GM12878 (cell line): ENCODE measurements at regions of chr12 and their contacts with region 1.

Region 1: DNA sequence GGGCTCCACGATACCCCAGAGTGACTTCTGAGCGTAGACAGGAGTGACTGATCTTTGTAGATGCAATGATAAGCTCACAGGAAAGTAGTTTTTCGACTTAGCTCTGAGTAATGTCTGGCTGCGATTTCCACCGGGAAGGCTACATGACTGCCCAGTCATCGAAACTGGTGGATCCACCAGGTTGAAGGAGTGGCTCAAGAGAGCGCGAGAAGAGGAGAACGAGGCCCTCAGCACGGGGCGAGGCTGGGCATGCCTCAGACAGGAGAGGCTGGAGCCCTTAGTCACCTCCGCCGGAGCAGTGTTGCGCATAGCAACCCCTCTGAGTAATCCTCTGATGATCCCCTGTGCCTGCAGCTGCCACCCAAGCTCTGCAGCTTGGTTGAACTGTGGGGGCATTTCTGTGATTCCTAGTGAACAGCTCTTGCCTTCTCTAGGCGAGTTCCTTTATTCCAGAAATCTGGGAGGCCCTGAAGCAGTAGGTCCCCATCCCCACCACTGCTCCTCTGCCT is 25.6 kb downstream of the ELK3 start:
- DNase-seq: no peak
- ATAC-seq: no peak
- H3K4me3 ChIP-seq: no peak overlapping the region
- H3K27ac ChIP-seq: no peak overlapping the region
- H3K4me1 ChIP-seq: peaks cover 13% of the 10 kb centered on the region
- H3K27me3 ChIP-seq: no peaks in the 10 kb centered on the region
- CTCF ChIP-seq: no peak
- EP300 ChIP-seq: no peak
- POLR2A ChIP-seq: no peak
- RAD21 ChIP-seq: no peak

Region 2: DNA sequence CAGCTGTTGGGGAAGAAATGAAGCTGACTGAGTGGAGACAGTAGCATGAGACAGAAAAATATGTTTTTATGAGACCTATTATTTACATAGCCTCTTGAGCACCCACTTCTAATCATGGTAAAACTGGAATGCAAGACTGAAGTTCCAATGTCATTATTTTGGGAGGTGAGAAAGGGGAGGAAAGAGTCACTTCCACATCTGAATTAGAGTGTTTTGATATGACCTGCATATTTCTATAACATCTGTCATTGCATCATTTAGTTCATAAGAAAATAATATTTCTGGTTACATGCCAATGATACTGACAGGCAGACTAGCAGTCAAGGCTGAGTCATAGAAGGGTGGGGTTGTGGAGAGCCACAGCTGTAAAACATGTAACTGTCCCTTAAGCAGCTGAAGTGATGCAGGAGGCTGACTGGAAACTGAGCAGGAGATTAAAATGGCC is 455.9 kb before region 1 on chr12:
- CTCF ChIA-PET with region 1: no interaction called
- POLR2A ChIA-PET with region 1: no interaction called
- RAD21 ChIA-PET with region 1: no interaction called
- SMC1A ChIA-PET with region 1: no interaction called
- in situ Hi-C with region 1: no loop called
- intact Hi-C with region 1: no loop called
- DNase-seq: no peak
- ATAC-seq: no peak
- H3K4me3 ChIP-seq: no peak overlapping the region
- H3K27ac ChIP-seq: no peak overlapping the region
- H3K4me1 ChIP-seq: no peaks in the 10 kb centered on the region
- H3K27me3 ChIP-seq: 0 out of 4 replicates have a peak, but pooled peaks cover 0 to 2% of the 10 kb centered on the region in 2 experiments
- CTCF ChIP-seq: no peak
- EP300 ChIP-seq: no peak
- POLR2A ChIP-seq: no peak
- RAD21 ChIP-seq: no peak

Region 3: GRCh38 chr12:95942524-95943329 is 277.0 kb before region 1 on chr12 and contains the start of gene CCDC38:
- CTCF ChIA-PET with region 1: interaction called, 10 read pairs
- POLR2A ChIA-PET with region 1: interaction called, 15 read pairs
- RAD21 ChIA-PET with region 1: no interaction called
- SMC1A ChIA-PET with region 1: no interaction called
- in situ Hi-C with region 1: no loop called
- intact Hi-C with region 1: no loop called
- DNase-seq: peak; percentile 57
- ATAC-seq: peak; percentile 98
- H3K4me3 ChIP-seq: peak within 1 kb of the TSS; percentile 94
- H3K27ac ChIP-seq: peak within 1 kb of the TSS; percentile 53
- H3K4me1 ChIP-seq: peaks cover 3% of the 10 kb centered on the region; the same call in 1 of the 2 replicates
- H3K27me3 ChIP-seq: no peaks in the 10 kb centered on the region
- CTCF ChIP-seq: no peak
- EP300 ChIP-seq: no peak
- POLR2A ChIP-seq: peak; percentile 78
- RAD21 ChIP-seq: no peak
- polyA plus RNA-seq, gene CCDC38: not detected

Region 4: GRCh38 chr12:96047229-96048211 is 172.2 kb before region 1 on chr12:
- CTCF ChIA-PET with region 1: interaction called, 13 read pairs
- POLR2A ChIA-PET with region 1: no interaction called
- RAD21 ChIA-PET with region 1: interaction called, 10 read pairs
- SMC1A ChIA-PET with region 1: interaction called, 7 read pairs
- in situ Hi-C with region 1: no loop called
- intact Hi-C with region 1: no loop called
- DNase-seq: peak; percentile 68
- ATAC-seq: peak; percentile 85
- H3K4me3 ChIP-seq: peak overlapping the region; percentile 18; the same call in 1 of the 2 replicates
- H3K27ac ChIP-seq: no peak overlapping the region
- H3K4me1 ChIP-seq: peaks cover 29% of the 10 kb centered on the region
- H3K27me3 ChIP-seq: no peaks in the 10 kb centered on the region
- CTCF ChIP-seq: no peak
- EP300 ChIP-seq: peak in 1 of 2 experiments; percentile 21; a peak in 1 of 4 replicates
- POLR2A ChIP-seq: no peak
- RAD21 ChIP-seq: no peak

Region 5: DNA sequence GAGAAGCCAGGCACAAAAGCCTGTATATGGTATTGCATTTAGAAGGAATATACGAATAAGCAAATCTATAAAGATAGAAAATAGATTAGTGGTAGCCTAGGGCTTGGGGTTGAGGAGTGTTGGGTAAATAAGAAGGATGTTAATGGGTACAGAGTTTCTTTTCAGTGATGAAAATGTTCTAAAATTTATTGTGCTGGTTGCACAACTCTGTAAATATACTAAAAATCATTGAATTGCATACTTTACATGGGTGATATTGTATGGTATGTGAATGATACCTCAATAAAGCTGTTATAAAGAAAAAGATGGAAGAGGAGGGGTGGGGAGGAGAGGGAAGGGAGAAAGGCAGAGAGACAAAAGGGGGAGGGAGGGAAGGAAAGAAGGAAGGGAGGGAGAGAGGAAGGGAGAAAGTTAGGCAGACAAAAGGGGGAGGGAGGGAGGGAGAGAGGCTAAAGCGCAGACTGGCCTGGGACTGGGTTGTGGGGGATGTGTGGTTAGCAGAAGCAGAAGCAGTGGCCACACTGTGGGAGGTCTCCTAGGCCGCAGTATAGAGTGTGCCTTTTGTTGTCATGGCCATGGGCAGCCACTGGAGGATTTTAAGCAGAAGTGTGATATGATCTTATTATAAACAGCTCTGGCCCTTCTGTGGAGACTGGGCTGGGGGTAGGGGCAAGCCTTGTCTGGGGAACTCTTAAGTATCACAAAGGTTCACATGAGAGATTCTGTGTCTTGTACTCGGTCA is 99.2 kb before region 1 on chr12:
- CTCF ChIA-PET with region 1: interaction called, 6 read pairs
- POLR2A ChIA-PET with region 1: no interaction called
- RAD21 ChIA-PET with region 1: interaction called, 3 read pairs
- SMC1A ChIA-PET with region 1: no interaction called
- in situ Hi-C with region 1: no loop called
- intact Hi-C with region 1: loop called (anchors 5 kb)
- DNase-seq: peak; percentile 15
- ATAC-seq: peak; percentile 98
- H3K4me3 ChIP-seq: no peak overlapping the region
- H3K27ac ChIP-seq: no peak overlapping the region
- H3K4me1 ChIP-seq: peaks cover 13% of the 10 kb centered on the region
- H3K27me3 ChIP-seq: no peaks in the 10 kb centered on the region; a peak in 1 of 4 replicates
- CTCF ChIP-seq: peak in 1 of 3 experiments; percentile 18; a peak in 1 of 6 replicates
- EP300 ChIP-seq: peak in 1 of 2 experiments; percentile 59; a peak in 1 of 4 replicates
- POLR2A ChIP-seq: no peak
- RAD21 ChIP-seq: no peak

Region 6: DNA sequence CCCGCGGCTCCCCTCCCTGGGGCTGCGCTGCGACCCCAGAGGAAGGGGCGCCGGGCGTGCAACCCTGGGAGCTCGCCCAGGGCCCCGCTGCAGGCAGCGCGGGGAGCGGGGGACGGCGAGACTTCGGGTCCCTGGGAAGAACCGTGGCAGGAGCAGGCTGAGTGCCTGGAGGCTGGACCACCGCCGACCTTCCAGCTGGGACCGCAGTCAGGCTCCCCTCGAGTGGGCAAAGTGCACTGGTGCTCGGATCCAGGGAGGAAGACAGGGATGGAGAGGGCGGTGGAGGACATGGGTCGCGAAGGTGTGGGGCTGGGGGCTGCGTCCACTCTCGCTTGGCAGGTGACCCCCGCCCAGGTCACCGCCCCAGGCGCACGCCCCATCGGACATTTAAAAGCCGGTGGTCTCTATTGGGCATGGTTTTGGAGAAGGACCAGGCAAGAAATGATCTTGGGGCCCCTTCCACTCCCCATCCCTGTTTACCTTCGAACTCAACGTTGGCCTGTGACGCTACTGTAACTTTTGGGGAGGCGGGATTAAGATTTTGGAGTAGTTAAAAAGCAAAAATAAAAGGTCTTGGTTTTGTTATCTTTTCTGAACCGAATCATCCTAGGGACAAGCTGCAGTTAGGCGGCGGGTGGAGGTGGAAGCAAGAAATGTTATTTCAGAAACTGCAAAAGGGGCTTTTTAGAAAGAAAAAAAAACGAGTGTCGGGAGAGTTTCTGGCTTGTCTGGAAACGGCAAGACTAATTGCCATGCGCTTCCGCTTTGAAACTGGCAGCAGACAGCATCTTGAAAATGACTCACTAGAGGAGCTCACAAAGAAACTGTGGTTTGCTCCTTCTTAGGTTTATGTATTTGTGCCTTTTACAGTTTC is 24.5 kb before region 1 on chr12:
- CTCF ChIA-PET with region 1: interaction called, 18 read pairs
- POLR2A ChIA-PET with region 1: no interaction called
- RAD21 ChIA-PET with region 1: interaction called, 25 read pairs
- SMC1A ChIA-PET with region 1: interaction called, 25 read pairs
- in situ Hi-C with region 1: no loop called
- intact Hi-C with region 1: no loop called
- DNase-seq: peak; percentile 80
- ATAC-seq: peak; percentile 80
- H3K4me3 ChIP-seq: peak overlapping the region; percentile 98
- H3K27ac ChIP-seq: peak overlapping the region; percentile 72
- H3K4me1 ChIP-seq: peaks cover 28% of the 10 kb centered on the region
- H3K27me3 ChIP-seq: peaks cover under 1 to 2% of the 10 kb centered on the region in 2 experiments; a peak in 3 of 4 replicates
- CTCF ChIP-seq: no peak
- EP300 ChIP-seq: peak; percentile 75 to 79; a peak in 3 of 4 replicates
- POLR2A ChIP-seq: peak; percentile 33; the same call in 1 of the 2 replicates
- RAD21 ChIP-seq: 0 out of 2 replicates have a peak, but pooled peaks have one; percentile 2

Region 7: GRCh38 chr12:96489103-96490056 is 269.6 kb after region 1 on chr12 and contains the start of gene CFAP54:
- CTCF ChIA-PET with region 1: interaction called, 13 read pairs
- POLR2A ChIA-PET with region 1: no interaction called
- RAD21 ChIA-PET with region 1: interaction called, 7 read pairs
- SMC1A ChIA-PET with region 1: interaction called, 10 read pairs
- in situ Hi-C with region 1: no loop called
- intact Hi-C with region 1: no loop called
- DNase-seq: peak; percentile 65
- ATAC-seq: peak; percentile 91
- H3K4me3 ChIP-seq: peak within 1 kb of the TSS; percentile 73
- H3K27ac ChIP-seq: no peak within 1 kb of the TSS
- H3K4me1 ChIP-seq: peaks cover 14% of the 10 kb centered on the region
- H3K27me3 ChIP-seq: no peaks in the 10 kb centered on the region
- CTCF ChIP-seq: peak; percentile 88 to 98 (median 91)
- EP300 ChIP-seq: peak; percentile 12 to 40; a peak in 2 of 4 replicates
- POLR2A ChIP-seq: no peak
- RAD21 ChIP-seq: peak; percentile 80
- polyA plus RNA-seq, gene CFAP54: 0.19 to 0.55 TPM